Common myeloid progenitor, CD34-positive (primary cell): ENCODE measurements at regions of chr10 and their contacts with region 1.

Region 1: DNA sequence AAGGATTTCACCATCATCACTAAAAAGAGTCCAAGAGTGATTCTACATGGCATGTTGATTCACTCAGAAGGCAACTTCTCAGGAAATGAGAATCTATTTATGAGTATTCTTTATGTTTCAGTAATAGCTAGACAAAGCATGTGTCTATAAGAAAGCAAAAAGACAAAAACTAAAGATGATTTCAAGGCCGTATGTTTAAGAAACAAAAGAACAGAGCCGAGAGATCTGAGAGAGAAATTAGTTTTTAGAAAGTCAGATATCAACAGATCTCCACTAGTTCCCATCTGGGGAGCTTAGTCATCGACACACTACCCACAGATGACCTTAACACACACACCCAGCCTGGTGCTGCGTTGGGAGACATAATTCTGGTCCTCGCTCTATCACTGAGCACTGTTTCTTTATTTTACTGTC is 21.0 kb downstream of the PIP4K2A start:
- DNase-seq: peak in 2 of 3 donors; percentile 66 to 76
- H3K4me3 ChIP-seq: no peak overlapping the region
- H3K27ac ChIP-seq: peak overlapping the region; percentile 23 to 69
- H3K4me1 ChIP-seq: peaks cover 0 to 20% (median 13%) of the 10 kb centered on the region in 4 experiments
- H3K27me3 ChIP-seq: no peaks in the 10 kb centered on the region

Region 2: GRCh38 chr10:22676435-22676834 is 16.9 kb before region 1 on chr10:
- CTCF ChIA-PET with region 1: interaction called, 11 read pairs
- POLR2A ChIA-PET with region 1: no interaction called
- DNase-seq: no peak
- H3K4me3 ChIP-seq: no peak overlapping the region
- H3K27ac ChIP-seq: no peak overlapping the region
- H3K4me1 ChIP-seq: peaks cover 23 to 67% (median 45%) of the 10 kb centered on the region in 4 experiments
- H3K27me3 ChIP-seq: no peaks in the 10 kb centered on the region

Region 3: GRCh38 chr10:22682237-22683139 is 10.9 kb before region 1 on chr10:
- CTCF ChIA-PET with region 1: interaction called, 11 read pairs
- POLR2A ChIA-PET with region 1: no interaction called
- DNase-seq: peak; percentile 69 to 92 (median 87)
- H3K4me3 ChIP-seq: peak overlapping the region in 3 of 7 experiments; percentile 21 to 45 (median 35)
- H3K27ac ChIP-seq: peak overlapping the region; percentile 95 to 98
- H3K4me1 ChIP-seq: peaks cover 30 to 85% (median 59%) of the 10 kb centered on the region in 4 experiments
- H3K27me3 ChIP-seq: no peaks in the 10 kb centered on the region

Region 4: DNA sequence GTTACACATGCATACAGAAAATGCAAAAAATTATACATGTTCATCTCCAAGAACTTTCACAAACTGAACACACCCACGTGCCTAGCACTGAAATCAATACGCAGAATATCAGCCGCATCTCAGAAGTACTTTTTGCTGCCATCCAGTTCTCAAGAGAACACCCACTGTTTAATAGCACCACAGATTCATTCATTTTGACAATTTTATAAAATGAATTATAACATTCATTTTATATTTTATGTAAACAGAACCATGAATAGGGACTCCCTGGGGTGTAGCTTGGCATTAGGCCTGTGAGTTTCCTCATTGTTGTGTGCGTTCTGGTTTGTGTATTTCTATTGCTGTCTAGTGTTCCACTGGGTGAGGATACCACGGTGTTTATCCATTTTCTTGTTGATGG is 98.3 kb after region 1 on chr10:
- CTCF ChIA-PET with region 1: no interaction called
- POLR2A ChIA-PET with region 1: no interaction called
- DNase-seq: no peak
- H3K4me3 ChIP-seq: no peak overlapping the region
- H3K27ac ChIP-seq: no peak overlapping the region
- H3K4me1 ChIP-seq: no peaks in the 10 kb centered on the region
- H3K27me3 ChIP-seq: no peaks in the 10 kb centered on the region